ENCODE measurements at regions of chr1 and their contacts with region 1.

Region 1: DNA sequence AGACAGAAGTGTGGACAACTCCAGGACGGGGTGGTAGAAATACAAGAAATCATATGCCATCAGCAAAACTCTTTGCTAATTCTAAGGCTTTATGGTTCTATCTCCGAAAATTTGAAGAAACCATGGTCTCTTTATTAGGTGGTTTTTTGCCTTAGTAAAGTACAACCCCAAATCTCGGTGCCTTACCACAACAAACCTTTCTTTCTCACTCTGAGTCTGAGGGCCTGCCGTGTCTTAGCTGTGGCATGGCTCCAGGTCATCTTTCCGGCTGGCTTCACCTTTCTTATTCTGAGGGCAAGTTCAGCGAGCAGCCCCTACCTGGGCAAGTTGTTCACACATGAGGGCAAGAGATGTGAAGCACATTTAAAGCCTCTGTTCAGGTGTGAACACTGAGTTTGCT is 280.6 kb downstream of the TTLL7 start:
- DNase-seq: no peak
- H3K4me3 ChIP-seq: no peak overlapping the region
- H3K27ac ChIP-seq: no peak overlapping the region
- H3K4me1 ChIP-seq: no peaks in the 10 kb centered on the region
- H3K27me3 ChIP-seq: no peaks in the 10 kb centered on the region
- CTCF ChIP-seq: no peak
- EP300 ChIP-seq: no peak
- POLR2A ChIP-seq: no peak
- RAD21 ChIP-seq: no peak

Region 2: GRCh38 chr1:83692524-83693381 is 25.6 kb before region 1 on chr1:
- CTCF ChIA-PET with region 1: interaction called, 10 read pairs
- POLR2A ChIA-PET with region 1: interaction called, 4 read pairs
- DNase-seq: peak; percentile 62 to 65
- H3K4me3 ChIP-seq: peak overlapping the region in 3 of 4 experiments; percentile 14 to 40 (median 17); a peak in 5 of 8 replicates
- H3K27ac ChIP-seq: peak overlapping the region; percentile 74; the same call in 1 of the 2 replicates
- H3K4me1 ChIP-seq: peaks cover 17 to 36% (median 30%) of the 10 kb centered on the region in 4 experiments
- H3K27me3 ChIP-seq: no peaks in the 10 kb centered on the region
- CTCF ChIP-seq: no peak
- EP300 ChIP-seq: no peak
- POLR2A ChIP-seq: peak; percentile 45 to 59; a peak in 2 of 3 replicates
- RAD21 ChIP-seq: no peak